Left lung (tissue), 14 donors: ENCODE measurements at regions of chr2 and their contacts with region 1.

Region 1: GRCh38 chr2:156341452-156342253 is 9.1 kb upstream of the NR4A2 start:
- DNase-seq: peak; percentile 88 to 95 (median 94)
- ATAC-seq: peak; percentile 86
- H3K4me3 ChIP-seq: peak overlapping the region; percentile 71
- H3K27ac ChIP-seq: peak overlapping the region; percentile 99 to 100
- H3K4me1 ChIP-seq: peaks cover 5 to 35% of the 10 kb centered on the region in 2 donors
- H3K27me3 ChIP-seq: no peaks in the 10 kb centered on the region
- CTCF ChIP-seq: no peak

Region 2: GRCh38 chr2:156399722-156400244 is 58.1 kb after region 1 on chr2:
- intact Hi-C with region 1: loop called in 1 of 2 experiments (anchors 10 kb)
- DNase-seq: peak in 1 of 4 donors; percentile 18
- ATAC-seq: peak; percentile 15
- H3K4me3 ChIP-seq: peak overlapping the region; percentile 56 to 66
- H3K27ac ChIP-seq: peak overlapping the region; percentile 82 to 95
- H3K4me1 ChIP-seq: peaks cover 6 to 24% of the 10 kb centered on the region in 2 donors
- H3K27me3 ChIP-seq: no peaks in the 10 kb centered on the region
- CTCF ChIP-seq: no peak

Region 3: DNA sequence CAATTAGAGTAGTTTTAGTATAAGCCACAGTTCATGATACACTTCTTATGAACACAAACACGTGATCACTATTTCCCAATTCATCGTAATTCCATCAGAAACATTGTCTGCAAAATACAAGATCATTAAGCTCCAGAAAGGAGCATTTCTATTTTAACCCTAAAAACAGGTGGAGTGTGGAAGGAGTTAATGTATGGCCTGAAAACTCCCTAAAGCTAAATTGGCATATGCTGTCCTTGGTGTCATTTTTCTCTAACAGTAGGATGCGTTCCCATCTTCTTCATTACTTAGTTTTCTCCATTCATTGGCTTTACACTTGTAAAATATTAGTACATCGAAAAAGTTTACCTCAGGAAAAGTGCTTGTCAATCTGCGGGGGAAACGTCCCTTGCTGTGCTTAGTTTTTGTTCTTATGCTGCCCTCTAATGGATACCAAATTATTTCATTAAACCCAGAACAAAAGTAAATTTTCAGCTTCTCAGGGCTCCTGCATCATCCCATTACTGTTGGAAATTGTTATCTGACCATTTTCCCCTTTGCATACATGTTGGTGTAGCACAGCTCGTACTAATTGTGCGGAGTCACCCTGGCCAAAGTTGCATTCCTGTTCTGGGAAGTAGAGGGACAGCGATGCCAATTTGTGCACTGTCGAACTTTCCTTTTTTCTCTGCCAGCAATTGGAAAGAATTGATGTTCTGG is 247.9 kb after region 1 on chr2:
- intact Hi-C with region 1: loop called in 1 of 2 experiments (anchors 10 kb)
- DNase-seq: peak in 2 of 4 donors; percentile 19 to 46
- ATAC-seq: peak; percentile 79
- H3K4me3 ChIP-seq: no peak overlapping the region
- H3K27ac ChIP-seq: no peak overlapping the region
- H3K4me1 ChIP-seq: peaks cover 0 to 5% of the 10 kb centered on the region in 2 donors
- H3K27me3 ChIP-seq: no peaks in the 10 kb centered on the region
- CTCF ChIP-seq: peak; percentile 12 to 17